MCF 10A (cell line): ENCODE measurements at regions of chr2 and their contacts with region 1.

Region 1: GRCh38 chr2:12716282-12717190 is at the start of gene TRIB2:
- DNase-seq: peak; percentile 82
- H3K4me3 Mint-ChIP-seq: peak within 1 kb of the TSS; percentile 95
- H3K27ac Mint-ChIP-seq: peak within 1 kb of the TSS; percentile 85
- H3K4me1 Mint-ChIP-seq: peaks cover 47% of the 10 kb centered on the region
- H3K27me3 Mint-ChIP-seq: no peaks in the 10 kb centered on the region
- CTCF ChIP-seq: no peak
- total RNA-seq, gene TRIB2: 12.9 and 14.3 TPM in 2 replicates

Region 2: GRCh38 chr2:11829947-11830707 is 886.4 kb before region 1 on chr2:
- CTCF ChIA-PET with region 1: interaction called, 18 read pairs
- POLR2A ChIA-PET with region 1: interaction called, 27 read pairs
- intact Hi-C with region 1: loop called (anchors 1 kb)
- DNase-seq: peak; percentile 98
- H3K4me3 Mint-ChIP-seq: peak overlapping the region; percentile 62
- H3K27ac Mint-ChIP-seq: peak overlapping the region; percentile 46
- H3K4me1 Mint-ChIP-seq: peaks cover 11% of the 10 kb centered on the region
- H3K27me3 Mint-ChIP-seq: no peaks in the 10 kb centered on the region
- CTCF ChIP-seq: peak; percentile 58

Region 3: GRCh38 chr2:12106440-12107080 is 610.0 kb before region 1 on chr2:
- CTCF ChIA-PET with region 1: no interaction called
- POLR2A ChIA-PET with region 1: no interaction called
- intact Hi-C with region 1: loop called (anchors 5 kb)
- DNase-seq: peak; percentile 97
- H3K4me3 Mint-ChIP-seq: peak overlapping the region; percentile 56
- H3K27ac Mint-ChIP-seq: peak overlapping the region; percentile 79
- H3K4me1 Mint-ChIP-seq: peaks cover 20% of the 10 kb centered on the region
- H3K27me3 Mint-ChIP-seq: no peaks in the 10 kb centered on the region
- CTCF ChIP-seq: no peak

Region 4: DNA sequence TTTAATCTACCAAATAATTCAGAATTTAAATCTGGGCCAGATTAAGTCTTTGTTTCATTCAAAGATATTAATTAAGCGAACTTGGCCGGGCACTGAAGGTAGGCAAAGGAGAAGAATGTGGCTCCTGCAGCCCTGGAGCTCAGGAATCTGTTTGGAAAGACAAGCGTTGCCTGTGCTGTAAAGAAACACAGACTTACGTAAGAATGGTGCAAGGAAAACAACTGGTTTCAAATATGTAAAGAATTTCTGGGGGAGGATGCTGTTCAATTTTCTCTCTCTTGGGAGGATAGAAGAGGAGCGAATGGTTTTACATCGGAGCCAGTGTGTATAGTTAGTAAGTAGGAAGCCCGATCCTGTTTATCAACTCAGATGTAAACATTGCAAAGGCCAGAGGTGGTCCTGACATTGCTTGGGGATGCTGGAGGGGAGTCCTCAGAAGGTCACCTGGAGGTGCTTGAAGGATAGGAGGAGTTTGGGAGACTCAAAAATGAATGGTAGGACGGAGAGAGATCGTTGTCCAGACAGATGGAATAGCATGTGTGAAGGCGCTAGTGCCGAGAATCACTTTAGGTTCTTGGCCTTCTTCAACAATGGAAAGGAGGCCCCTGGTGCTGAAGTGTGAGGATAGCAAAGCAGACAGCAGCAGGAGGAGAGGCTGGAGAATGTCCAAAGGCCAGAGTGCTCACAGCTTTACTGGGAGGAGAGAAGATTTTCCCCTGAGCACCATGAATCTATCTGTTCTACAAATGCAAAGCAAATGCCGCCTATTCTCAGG is 514.0 kb before region 1 on chr2:
- CTCF ChIA-PET with region 1: no interaction called
- POLR2A ChIA-PET with region 1: no interaction called
- intact Hi-C with region 1: no loop called
- DNase-seq: peak; percentile 10
- H3K4me3 Mint-ChIP-seq: no peak overlapping the region
- H3K27ac Mint-ChIP-seq: no peak overlapping the region
- H3K4me1 Mint-ChIP-seq: peaks cover 7% of the 10 kb centered on the region
- H3K27me3 Mint-ChIP-seq: no peaks in the 10 kb centered on the region
- CTCF ChIP-seq: no peak

Region 5: GRCh38 chr2:12320991-12321641 is 395.4 kb before region 1 on chr2:
- CTCF ChIA-PET with region 1: no interaction called
- POLR2A ChIA-PET with region 1: interaction called, 9 read pairs
- intact Hi-C with region 1: loop called (anchors 2 kb)
- DNase-seq: peak; percentile 90
- H3K4me3 Mint-ChIP-seq: no peak overlapping the region
- H3K27ac Mint-ChIP-seq: peak overlapping the region; percentile 71
- H3K4me1 Mint-ChIP-seq: peaks cover 51% of the 10 kb centered on the region
- H3K27me3 Mint-ChIP-seq: no peaks in the 10 kb centered on the region
- CTCF ChIP-seq: no peak

Region 6: DNA sequence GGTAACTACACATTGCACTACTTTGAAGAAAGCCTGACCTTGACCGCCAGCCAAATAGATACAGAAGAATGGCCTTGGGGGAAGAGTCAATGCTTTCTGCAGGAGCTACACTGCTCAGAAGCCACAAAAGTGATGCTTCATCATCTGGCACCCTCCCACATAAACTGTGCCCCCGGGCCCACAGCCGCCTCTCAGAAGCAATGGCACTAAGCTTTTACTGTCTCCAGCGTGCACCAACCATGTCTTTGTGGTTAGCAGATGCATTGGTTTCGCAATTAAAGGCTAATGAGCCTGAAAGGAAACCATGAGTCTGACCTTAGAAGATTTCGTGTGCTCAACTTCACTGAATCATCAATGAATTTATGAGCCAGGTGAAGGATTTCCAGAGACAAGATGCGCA is 209.2 kb before region 1 on chr2:
- CTCF ChIA-PET with region 1: interaction called, 7 read pairs
- POLR2A ChIA-PET with region 1: interaction called, 10 read pairs
- intact Hi-C with region 1: loop called (anchors 1 kb)
- DNase-seq: peak; percentile 99
- H3K4me3 Mint-ChIP-seq: no peak overlapping the region
- H3K27ac Mint-ChIP-seq: peak overlapping the region; percentile 22
- H3K4me1 Mint-ChIP-seq: peaks cover 38% of the 10 kb centered on the region
- H3K27me3 Mint-ChIP-seq: no peaks in the 10 kb centered on the region
- CTCF ChIP-seq: no peak

Region 7: GRCh38 chr2:12702305-12703121 is 14.0 kb before region 1 on chr2:
- CTCF ChIA-PET with region 1: interaction called, 19 read pairs
- POLR2A ChIA-PET with region 1: interaction called, 44 read pairs
- intact Hi-C with region 1: no loop called
- DNase-seq: peak; percentile 91
- H3K4me3 Mint-ChIP-seq: peak overlapping the region; percentile 40
- H3K27ac Mint-ChIP-seq: peak overlapping the region; percentile 89
- H3K4me1 Mint-ChIP-seq: peaks cover 22% of the 10 kb centered on the region
- H3K27me3 Mint-ChIP-seq: no peaks in the 10 kb centered on the region
- CTCF ChIP-seq: no peak